ENCODE measurements at regions of chr2 and their contacts with region 1.

Region 1: DNA sequence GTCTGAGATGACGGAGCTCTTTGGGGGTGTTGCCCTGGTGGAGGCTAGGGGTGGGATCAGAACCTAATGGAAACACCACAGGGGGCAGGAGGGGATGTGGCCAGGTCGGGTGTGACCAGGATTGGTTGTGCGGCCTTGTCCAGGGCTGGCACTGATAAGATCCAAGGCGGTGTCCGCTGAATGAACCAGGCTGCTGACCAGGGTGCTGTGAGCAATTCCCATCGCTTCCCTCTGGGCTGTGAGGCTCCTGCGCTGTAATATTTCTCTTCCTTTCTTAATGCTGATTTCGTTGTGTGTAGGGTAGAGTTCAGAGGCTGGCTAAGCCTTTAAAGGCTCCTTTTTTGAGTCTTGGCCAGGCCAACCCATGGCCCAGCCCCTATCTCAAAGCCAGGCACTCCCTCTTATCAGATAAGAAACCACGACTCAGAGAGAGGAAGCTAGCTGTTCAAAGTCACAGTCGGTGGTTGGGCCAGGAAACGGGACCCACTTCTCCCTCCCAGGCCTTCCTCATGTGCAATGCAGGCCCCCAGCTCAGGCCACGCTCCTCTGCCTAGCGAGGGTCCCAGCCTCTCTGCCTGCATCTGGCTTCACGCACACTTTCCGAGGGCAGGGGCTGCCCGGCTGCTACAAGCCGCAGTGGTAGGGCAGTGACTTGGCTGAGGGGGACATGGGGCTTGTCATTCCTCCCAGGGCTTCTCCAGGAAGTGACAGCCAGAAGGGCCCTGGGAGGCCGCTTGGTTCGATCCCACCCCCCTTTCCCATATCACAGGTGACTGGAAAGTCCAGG is 26.0 kb upstream of the FOSL2 start:
- DNase-seq: peak; percentile 83
- H3K4me3 Mint-ChIP-seq: peak overlapping the region; percentile 52
- H3K27ac Mint-ChIP-seq: peak overlapping the region; percentile 86
- H3K4me1 Mint-ChIP-seq: peaks cover 69% of the 10 kb centered on the region
- H3K27me3 Mint-ChIP-seq: peaks cover 4% of the 10 kb centered on the region

Region 2: DNA sequence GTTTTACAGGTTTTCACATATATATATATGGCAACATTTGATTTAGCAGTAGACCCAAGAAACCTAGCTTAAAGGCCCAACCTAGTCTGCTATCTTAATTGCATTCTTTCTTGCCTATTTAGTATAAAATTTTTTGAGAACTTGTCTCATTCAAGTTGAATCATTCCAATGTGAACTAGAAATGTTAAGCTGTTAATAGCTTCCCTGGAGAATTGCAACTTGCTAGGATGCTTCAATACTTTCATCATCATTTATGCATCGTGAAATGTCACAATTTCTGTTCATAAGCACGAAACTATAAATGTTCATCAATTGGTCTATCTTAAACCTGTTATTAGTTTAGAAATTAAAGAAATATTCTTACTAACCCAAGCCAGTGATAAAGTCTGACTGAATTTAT is 258.5 kb before region 1 on chr2:
- CTCF ChIA-PET with region 1: no interaction called
- POLR2A ChIA-PET with region 1: no interaction called
- DNase-seq: no peak
- H3K4me3 Mint-ChIP-seq: no peak overlapping the region
- H3K27ac Mint-ChIP-seq: no peak overlapping the region
- H3K4me1 Mint-ChIP-seq: peaks cover 1% of the 10 kb centered on the region
- H3K27me3 Mint-ChIP-seq: no peaks in the 10 kb centered on the region

Region 3: GRCh38 chr2:28333606-28334526 is 32.8 kb before region 1 on chr2:
- CTCF ChIA-PET with region 1: no interaction called
- POLR2A ChIA-PET with region 1: no interaction called
- DNase-seq: no peak
- H3K4me3 Mint-ChIP-seq: no peak overlapping the region
- H3K27ac Mint-ChIP-seq: no peak overlapping the region
- H3K4me1 Mint-ChIP-seq: peaks cover 5% of the 10 kb centered on the region
- H3K27me3 Mint-ChIP-seq: no peaks in the 10 kb centered on the region

Region 4: DNA sequence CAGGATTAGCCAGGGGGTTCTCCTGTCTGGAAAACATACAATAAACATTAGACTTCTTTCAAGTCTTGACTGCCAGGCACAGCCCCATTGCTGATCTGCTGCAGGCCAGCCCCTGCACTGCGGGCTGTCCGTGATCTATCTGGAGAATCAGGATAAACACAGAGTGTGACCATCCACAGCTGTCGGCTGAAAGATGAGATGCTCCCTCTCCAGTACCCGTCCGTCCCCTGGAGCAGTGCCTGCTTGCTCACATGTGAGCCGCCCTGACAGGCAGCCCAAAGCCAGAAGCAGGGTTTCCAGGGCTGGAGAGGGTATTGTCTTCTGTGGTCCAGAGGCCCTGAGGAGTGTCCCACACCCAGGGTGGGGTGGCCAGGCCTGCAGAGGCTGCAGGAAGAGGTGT is 20.1 kb before region 1 on chr2:
- CTCF ChIA-PET with region 1: interaction called, 3 read pairs
- POLR2A ChIA-PET with region 1: interaction called, 44 read pairs
- DNase-seq: no peak
- H3K4me3 Mint-ChIP-seq: no peak overlapping the region
- H3K27ac Mint-ChIP-seq: peak overlapping the region; percentile 21
- H3K4me1 Mint-ChIP-seq: peaks cover 45% of the 10 kb centered on the region
- H3K27me3 Mint-ChIP-seq: no peaks in the 10 kb centered on the region

Region 5: DNA sequence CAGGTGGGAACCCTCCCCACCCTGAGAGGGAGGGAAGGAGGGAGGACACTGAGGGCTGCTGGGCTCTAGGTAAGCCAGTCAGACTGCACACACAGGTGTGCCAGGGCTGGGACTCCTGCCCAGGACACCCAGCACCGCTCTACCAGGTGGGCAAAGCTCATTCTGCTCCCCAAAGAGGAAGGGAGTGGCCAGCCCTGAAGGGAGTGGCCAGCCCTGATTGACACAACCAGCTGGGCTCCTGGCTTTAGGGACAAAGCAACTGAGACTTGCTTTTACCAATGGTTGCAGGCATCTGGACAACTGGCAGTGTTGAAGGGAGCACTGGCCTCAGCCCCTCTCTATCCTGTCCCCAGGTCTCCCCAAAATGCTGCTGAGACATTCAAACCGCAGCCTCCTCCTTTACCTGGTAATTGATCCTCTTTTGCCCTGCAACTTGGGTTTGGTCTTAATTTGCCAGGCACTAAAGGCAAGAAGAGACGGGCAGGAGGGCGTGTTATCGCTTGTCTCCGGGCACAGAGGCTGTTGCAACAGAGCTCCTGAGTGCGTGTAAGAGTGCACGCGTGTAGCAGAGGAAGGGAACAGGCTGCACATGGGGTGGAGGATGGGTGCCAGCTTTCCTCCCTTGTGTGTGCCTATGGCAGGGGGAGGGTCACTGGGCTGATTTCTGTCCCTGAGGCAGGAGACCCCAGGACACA is 11.4 kb after region 1 on chr2:
- CTCF ChIA-PET with region 1: no interaction called
- POLR2A ChIA-PET with region 1: interaction called, 64 read pairs
- DNase-seq: no peak
- H3K4me3 Mint-ChIP-seq: no peak overlapping the region
- H3K27ac Mint-ChIP-seq: peak overlapping the region; percentile 6
- H3K4me1 Mint-ChIP-seq: peaks cover 34% of the 10 kb centered on the region
- H3K27me3 Mint-ChIP-seq: peaks cover 7% of the 10 kb centered on the region

Measured in activated CD4-positive, alpha-beta memory T cell treated with anti-CD3 and anti-CD28 coated beads, Interleukin-2, amount 10 ng/mL, durations not matched to agents 7 days and 5 days (primary cell).